ENCODE measurements at regions of chr21 and their contacts with region 1.

Region 1: GRCh38 chr21:45439161-45439872 is 34.4 kb downstream of the COL18A1 start:
- DNase-seq: peak; percentile 57 to 87
- ATAC-seq: peak; percentile 93

Region 2: GRCh38 chr21:45192332-45192731 is 247.0 kb before region 1 on chr21:
- intact Hi-C with region 1: no loop called
- DNase-seq: no peak
- ATAC-seq: no peak

Region 3: DNA sequence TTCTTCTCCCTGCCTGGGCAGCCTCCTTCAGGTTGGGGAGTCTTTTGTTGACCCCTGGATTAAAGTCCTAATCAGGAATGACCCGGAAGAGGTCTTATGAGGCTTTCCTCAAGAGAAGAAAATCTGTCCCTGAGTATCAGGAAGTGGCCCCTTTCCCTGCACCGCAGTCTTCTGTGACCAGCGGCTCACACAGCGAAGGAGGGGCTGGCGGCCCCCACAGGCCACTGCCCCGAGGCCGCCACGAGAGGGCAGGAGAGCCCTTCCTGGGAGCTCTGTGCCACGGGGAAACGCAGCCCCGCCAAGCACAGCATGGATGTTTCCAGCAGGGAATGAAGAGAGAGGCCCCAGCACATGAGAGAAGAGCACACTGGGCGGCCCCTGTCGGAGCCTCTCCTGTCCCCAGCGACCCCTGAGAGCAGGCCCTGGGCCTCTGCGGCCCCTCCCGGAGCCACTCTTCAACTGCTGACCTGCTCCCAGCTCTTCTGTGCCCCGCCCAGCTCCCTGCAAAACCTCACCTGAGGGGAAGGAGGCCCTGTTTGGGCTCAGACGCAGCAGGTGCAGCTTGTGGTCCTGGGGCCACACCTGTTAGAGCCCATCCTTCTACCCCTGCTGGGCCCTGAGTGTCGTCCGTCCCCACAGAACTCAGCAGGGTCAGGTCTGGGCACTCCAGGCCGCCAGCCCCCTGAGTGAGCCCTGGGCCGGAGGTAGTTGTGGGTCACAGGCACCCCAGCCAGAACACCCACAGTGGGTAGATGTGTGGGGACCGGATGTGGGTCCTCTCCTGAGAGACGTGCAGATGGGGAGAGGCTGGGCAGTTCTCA is 146.7 kb before region 1 on chr21:
- intact Hi-C with region 1: loop called (anchors 5 kb)
- DNase-seq: peak; percentile 77 to 79
- ATAC-seq: peak; percentile 62